SK-N-SH (cell line): ENCODE measurements at regions of chr5 and their contacts with region 1.

Region 1: GRCh38 chr5:171913987-171914273 is 92.5 kb downstream of the FBXW11 start:
- DNase-seq: no peak
- H3K4me3 ChIP-seq: no peak overlapping the region
- H3K27ac ChIP-seq: no peak overlapping the region
- H3K4me1 ChIP-seq: peaks cover 2 to 16% of the 10 kb centered on the region in 2 experiments; a peak in 2 of 4 replicates
- H3K27me3 ChIP-seq: no peaks in the 10 kb centered on the region
- CTCF ChIP-seq: no peak
- EP300 ChIP-seq: no peak
- RAD21 ChIP-seq: no peak

Region 2: DNA sequence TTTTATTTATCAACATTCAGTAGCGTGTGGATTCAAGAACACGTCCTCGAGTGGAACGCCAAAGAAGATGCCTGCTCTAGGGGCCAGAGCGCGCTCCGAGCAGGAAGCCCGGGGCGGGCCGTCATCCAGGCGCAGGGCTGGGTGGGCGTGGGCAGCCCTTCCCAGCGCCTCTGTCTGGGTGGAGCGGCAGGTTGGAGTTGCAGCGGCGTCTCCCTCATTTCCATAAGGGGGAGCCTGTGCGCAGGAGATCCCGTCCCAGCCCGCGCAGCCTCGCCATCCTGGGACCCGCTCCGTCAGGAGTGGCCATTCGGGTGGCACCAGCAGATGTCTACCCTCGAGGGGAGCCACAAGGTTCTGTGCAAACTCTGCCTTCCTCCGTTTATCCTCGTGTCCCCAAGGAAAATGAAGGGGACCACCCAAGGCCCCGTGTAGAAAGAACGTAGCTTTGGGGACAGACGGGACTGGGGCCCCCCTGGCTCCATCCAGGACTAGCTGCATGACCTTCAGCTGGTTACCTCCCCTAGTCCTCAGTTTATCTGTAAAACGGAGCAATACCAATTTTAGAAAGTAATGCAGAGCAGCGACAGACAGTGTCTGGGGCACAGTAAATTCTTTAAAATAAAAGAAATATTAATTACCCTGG is 283.8 kb before region 1 on chr5:
- CTCF ChIA-PET with region 1: interaction called, 33 read pairs
- POLR2A ChIA-PET with region 1: no interaction called
- DNase-seq: peak; percentile 91
- H3K4me3 ChIP-seq: peak overlapping the region in 1 of 2 experiments; percentile 21; a peak in 2 of 4 replicates
- H3K27ac ChIP-seq: no peak overlapping the region
- H3K4me1 ChIP-seq: peaks cover 0 to 11% of the 10 kb centered on the region in 2 experiments; a peak in 1 of 4 replicates
- H3K27me3 ChIP-seq: 0 out of 2 replicates have a peak, but pooled peaks cover 9% of the 10 kb centered on the region
- CTCF ChIP-seq: peak; percentile 47
- EP300 ChIP-seq: no peak
- RAD21 ChIP-seq: peak; percentile 78

Region 3: GRCh38 chr5:171927345-171927941 is 13.5 kb after region 1 on chr5:
- CTCF ChIA-PET with region 1: interaction called, 41 read pairs
- POLR2A ChIA-PET with region 1: no interaction called
- DNase-seq: no peak
- H3K4me3 ChIP-seq: no peak overlapping the region; a peak in 1 of 4 replicates
- H3K27ac ChIP-seq: no peak overlapping the region
- H3K4me1 ChIP-seq: no peaks in the 10 kb centered on the region; a peak in 1 of 4 replicates
- H3K27me3 ChIP-seq: no peaks in the 10 kb centered on the region
- CTCF ChIP-seq: peak; percentile 58
- EP300 ChIP-seq: no peak
- RAD21 ChIP-seq: no peak

Region 4: GRCh38 chr5:172044631-172045314 is 130.8 kb after region 1 on chr5:
- CTCF ChIA-PET with region 1: interaction called, 19 read pairs
- POLR2A ChIA-PET with region 1: no interaction called
- DNase-seq: no peak
- H3K4me3 ChIP-seq: no peak overlapping the region
- H3K27ac ChIP-seq: no peak overlapping the region
- H3K4me1 ChIP-seq: no peaks in the 10 kb centered on the region
- H3K27me3 ChIP-seq: no peaks in the 10 kb centered on the region
- CTCF ChIP-seq: no peak
- EP300 ChIP-seq: no peak
- RAD21 ChIP-seq: no peak

Region 5: GRCh38 chr5:172106511-172107356 is 192.8 kb after region 1 on chr5:
- CTCF ChIA-PET with region 1: interaction called, 12 read pairs
- POLR2A ChIA-PET with region 1: no interaction called
- DNase-seq: peak; percentile 86
- H3K4me3 ChIP-seq: peak overlapping the region in 1 of 2 experiments; percentile 14; a peak in 3 of 4 replicates
- H3K27ac ChIP-seq: no peak overlapping the region
- H3K4me1 ChIP-seq: peaks cover 14 to 32% of the 10 kb centered on the region in 2 experiments
- H3K27me3 ChIP-seq: no peaks in the 10 kb centered on the region
- CTCF ChIP-seq: peak; percentile 85
- EP300 ChIP-seq: no peak
- RAD21 ChIP-seq: peak; percentile 85

Region 6: GRCh38 chr5:172293054-172293744 is 379.3 kb after region 1 on chr5:
- CTCF ChIA-PET with region 1: interaction called, 15 read pairs
- POLR2A ChIA-PET with region 1: no interaction called
- DNase-seq: peak; percentile 76
- H3K4me3 ChIP-seq: peak overlapping the region in 1 of 2 experiments; percentile 3; a peak in 1 of 4 replicates
- H3K27ac ChIP-seq: no peak overlapping the region
- H3K4me1 ChIP-seq: peaks cover 0 to 4% of the 10 kb centered on the region in 2 experiments; a peak in 1 of 4 replicates
- H3K27me3 ChIP-seq: no peaks in the 10 kb centered on the region
- CTCF ChIP-seq: peak; percentile 93
- EP300 ChIP-seq: no peak
- RAD21 ChIP-seq: peak; percentile 93